GM13977 (cell line): ENCODE measurements at regions of chr6 and their contacts with region 1.

Region 1: DNA sequence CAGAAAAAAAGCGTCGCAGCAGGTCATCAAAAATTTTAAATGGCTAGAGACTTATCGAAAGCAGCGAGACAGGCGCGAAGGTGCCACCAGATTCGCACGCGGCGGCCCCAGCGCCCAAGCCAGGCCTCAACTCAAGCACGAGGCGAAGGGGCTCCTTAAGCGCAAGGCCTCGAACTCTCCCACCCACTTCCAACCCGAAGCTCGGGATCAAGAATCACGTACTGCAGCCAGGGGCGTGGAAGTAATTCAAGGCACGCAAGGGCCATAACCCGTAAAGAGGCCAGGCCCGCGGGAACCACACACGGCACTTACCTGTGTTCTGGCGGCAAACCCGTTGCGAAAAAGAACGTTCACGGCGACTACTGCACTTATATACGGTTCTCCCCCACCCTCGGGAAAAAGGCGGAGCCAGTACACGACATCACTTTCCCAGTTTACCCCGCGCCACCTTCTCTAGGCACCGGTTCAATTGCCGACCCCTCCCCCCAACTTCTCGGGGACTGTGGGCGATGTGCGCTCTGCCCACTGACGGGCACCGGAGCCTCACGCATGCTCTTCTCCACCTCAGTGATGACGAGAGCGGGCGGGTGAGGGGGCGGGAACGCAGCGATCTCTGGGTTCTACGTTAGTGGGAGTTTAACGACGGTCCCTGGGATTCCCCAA is at the start of gene EEF1A1:
- DNase-seq: peak; percentile 94
- CTCF ChIP-seq: no peak

Region 2: GRCh38 chr6:73579851-73580246 is 59.0 kb after region 1 on chr6:
- in situ Hi-C with region 1: loop called (anchors 10 kb)
- DNase-seq: no peak
- CTCF ChIP-seq: no peak

Region 3: GRCh38 chr6:73610444-73611275 is 89.8 kb after region 1 on chr6:
- in situ Hi-C with region 1: loop called (anchors 10 kb)
- DNase-seq: peak; percentile 41
- CTCF ChIP-seq: peak; percentile 61